HEK293 (cell line): ENCODE measurements at regions of chr7 and their contacts with region 1.

Region 1: DNA sequence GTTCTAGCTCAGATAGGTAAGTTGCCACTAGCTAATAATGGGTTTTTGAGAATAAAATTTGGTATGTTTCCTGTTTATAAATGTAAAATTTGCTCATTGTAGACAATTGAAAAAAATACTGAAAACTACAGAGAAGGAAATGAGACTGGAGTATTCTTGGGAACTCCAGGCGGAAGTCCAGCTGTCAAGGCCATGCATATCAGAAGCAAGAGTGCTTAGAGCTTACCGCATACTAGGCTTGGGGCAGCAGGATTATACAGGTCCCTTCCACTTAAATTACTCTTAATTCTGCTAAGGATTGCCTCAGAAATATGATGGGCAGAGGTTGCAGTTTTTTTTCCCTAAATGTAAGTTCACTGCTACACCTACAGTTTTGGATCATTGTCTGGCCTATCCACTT is 26.6 kb downstream of the UMAD1 start:
- H3K4me3 ChIP-seq: no peak overlapping the region
- H3K27ac ChIP-seq: no peak overlapping the region
- H3K4me1 ChIP-seq: no peaks in the 10 kb centered on the region
- CTCF ChIP-seq: no peak

Region 2: GRCh38 chr7:7498856-7499580 is 168.2 kb before region 1 on chr7:
- CTCF ChIA-PET with region 1: no interaction called
- POLR2A ChIA-PET with region 1: no interaction called
- H3K4me3 ChIP-seq: no peak overlapping the region
- H3K27ac ChIP-seq: no peak overlapping the region
- H3K4me1 ChIP-seq: no peaks in the 10 kb centered on the region
- CTCF ChIP-seq: no peak

Region 3: DNA sequence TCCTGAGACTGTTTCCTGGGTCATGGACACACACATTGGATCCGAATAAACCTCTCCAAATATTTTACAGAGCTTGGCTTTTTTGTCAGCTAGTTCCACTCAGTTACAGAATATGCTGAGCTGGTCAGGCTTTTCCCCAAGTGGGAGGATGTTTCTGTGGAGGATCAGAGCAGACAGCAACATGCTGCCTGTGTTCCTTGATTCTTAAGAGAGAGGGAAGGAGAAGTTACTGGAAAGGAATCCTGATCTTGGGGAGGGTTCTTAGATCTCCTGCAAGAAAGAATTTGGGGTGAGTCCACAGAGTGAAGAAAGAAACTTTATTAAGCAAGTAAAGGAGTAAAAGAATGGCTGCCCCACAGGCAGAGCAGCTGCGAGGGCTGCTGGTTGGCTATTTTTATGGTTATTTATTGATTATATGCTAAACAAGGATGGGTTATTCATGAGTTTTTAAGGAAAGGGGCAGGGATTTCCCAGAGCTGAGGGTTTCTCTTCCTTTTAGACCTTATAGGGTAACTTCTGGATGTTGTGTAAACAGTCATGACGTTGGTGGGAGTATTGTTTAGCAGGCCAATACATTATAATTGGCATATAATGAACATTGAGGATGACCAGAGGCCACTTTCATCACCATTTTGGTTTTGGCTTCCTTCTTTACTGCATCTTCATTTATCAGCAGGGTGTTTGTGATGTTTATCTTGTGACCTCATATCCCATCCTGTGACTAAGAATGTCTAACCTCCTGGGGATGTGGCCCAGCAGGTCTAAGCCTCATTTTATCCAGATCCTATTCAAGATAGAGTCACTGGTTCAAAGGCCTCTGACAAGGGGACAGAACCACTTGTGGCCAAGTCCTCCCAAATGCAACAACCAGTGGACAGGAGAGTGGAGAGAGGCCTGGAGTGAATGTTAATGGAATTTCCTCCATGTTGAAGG is 128.3 kb after region 1 on chr7:
- CTCF ChIA-PET with region 1: no interaction called
- POLR2A ChIA-PET with region 1: no interaction called
- H3K4me3 ChIP-seq: no peak overlapping the region
- H3K27ac ChIP-seq: no peak overlapping the region
- H3K4me1 ChIP-seq: peaks cover 5% of the 10 kb centered on the region; the same call in 1 of the 2 replicates
- CTCF ChIP-seq: no peak

Region 4: GRCh38 chr7:8217200-8218068 is 550.2 kb after region 1 on chr7:
- CTCF ChIA-PET with region 1: interaction called, 10 read pairs
- POLR2A ChIA-PET with region 1: no interaction called
- H3K4me3 ChIP-seq: no peak overlapping the region
- H3K27ac ChIP-seq: no peak overlapping the region
- H3K4me1 ChIP-seq: no peaks in the 10 kb centered on the region
- CTCF ChIP-seq: peak; percentile 35; the same call in 1 of the 2 replicates